Spleen (tissue), 13 donors: ENCODE measurements at regions of chr3 and their contacts with region 1.

Region 1: GRCh38 chr3:187164885-187165543 is 25.7 kb upstream of the RPL39L start:
- DNase-seq: no peak
- H3K4me3 ChIP-seq: no peak overlapping the region
- H3K27ac ChIP-seq: no peak overlapping the region
- H3K4me1 ChIP-seq: peaks cover 0 to 4% (median 0%) of the 10 kb centered on the region in 6 donors
- H3K27me3 ChIP-seq: peaks cover 0 to 15% (median 0%) of the 10 kb centered on the region in 7 donors
- CTCF ChIP-seq: peak; percentile 61 to 90 (median 75)
- POLR2A ChIP-seq: no peak

Region 2: DNA sequence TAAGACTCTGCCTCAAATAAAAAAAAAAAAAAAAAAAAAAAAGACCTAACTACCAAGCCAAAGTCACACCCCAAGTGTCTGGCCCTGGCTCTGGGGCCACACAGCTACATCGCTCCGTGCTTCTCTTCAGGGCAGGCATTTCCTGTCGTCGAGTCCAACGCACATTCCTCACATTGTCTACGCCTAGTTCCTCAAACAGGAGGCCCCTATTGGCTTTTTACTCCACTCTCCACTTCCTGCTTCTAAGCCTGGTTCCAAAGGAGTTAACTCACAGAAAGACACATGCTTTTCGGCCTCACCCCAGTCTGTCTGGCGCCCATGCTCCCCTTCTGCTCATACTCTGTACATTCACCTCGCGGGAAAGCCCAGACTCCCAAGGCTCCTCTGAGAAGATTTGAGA is 419.0 kb before region 1 on chr3:
- intact Hi-C with region 1: no loop called
- DNase-seq: no peak
- H3K4me3 ChIP-seq: no peak overlapping the region
- H3K27ac ChIP-seq: no peak overlapping the region
- H3K4me1 ChIP-seq: no peaks in the 10 kb centered on the region
- H3K27me3 ChIP-seq: no peaks in the 10 kb centered on the region
- CTCF ChIP-seq: no peak
- POLR2A ChIP-seq: no peak

Region 3: DNA sequence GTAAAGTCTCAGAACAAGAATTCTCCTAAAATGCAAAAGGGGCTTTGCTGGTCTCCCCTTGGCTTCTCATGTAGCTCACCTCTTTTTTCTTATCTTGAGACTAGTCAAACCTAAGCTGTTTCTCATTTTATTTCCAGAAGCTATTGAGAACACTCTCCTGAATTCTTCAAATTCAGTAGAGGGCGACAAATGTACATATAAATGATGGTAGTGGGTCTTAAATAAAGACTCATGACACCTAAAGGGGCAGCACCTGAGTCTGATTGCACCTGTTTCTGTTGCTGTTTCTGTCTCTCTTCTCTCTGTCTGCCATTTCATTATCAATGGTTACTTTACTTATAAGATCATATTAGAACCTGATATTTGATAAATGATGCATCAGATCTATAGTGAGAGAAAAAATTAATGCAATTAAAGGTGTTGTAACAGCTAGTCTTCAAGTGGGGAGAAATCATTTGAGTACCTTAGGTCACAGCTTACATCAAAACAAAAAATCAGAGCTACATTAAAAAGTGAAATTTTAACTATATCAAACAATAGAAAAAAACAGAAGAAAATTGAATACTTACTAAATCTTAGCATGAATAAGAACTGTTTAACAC is 315.5 kb before region 1 on chr3:
- intact Hi-C with region 1: loop called (anchors 5 kb)
- DNase-seq: no peak
- H3K4me3 ChIP-seq: no peak overlapping the region
- H3K27ac ChIP-seq: no peak overlapping the region
- H3K4me1 ChIP-seq: peaks cover 0 to 9% (median 0%) of the 10 kb centered on the region in 6 donors
- H3K27me3 ChIP-seq: peaks cover 0 to 22% (median 0%) of the 10 kb centered on the region in 7 donors
- CTCF ChIP-seq: peak in 10 of 11 experiments; percentile 31 to 73 (median 54)
- POLR2A ChIP-seq: no peak

Region 4: DNA sequence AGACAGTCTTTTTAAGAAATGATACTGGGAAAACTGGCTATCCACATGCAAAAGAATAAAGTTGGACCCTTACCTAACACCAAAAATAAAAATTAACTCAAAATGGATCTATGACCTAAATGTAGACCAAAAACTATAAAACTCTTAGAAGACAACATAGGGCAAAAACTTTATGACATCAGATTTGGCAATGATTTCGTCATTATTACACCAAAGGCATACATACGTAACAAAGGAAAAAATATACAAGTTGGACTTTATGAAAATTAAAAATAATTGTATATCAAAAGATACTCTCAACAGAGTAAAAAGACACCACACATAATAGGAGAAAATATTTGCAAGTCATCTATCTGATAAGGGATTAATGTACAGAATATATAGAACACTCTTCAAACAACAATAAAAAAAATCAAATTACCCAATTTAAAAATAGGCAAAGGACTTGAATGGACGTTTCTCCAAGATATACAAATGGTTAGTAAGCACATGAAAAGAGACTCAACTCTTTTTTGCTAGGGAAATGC is 103.3 kb before region 1 on chr3:
- intact Hi-C with region 1: no loop called
- DNase-seq: no peak
- H3K4me3 ChIP-seq: no peak overlapping the region
- H3K27ac ChIP-seq: no peak overlapping the region
- H3K4me1 ChIP-seq: peaks cover 6 to 70% (median 31%) of the 10 kb centered on the region in 6 donors
- H3K27me3 ChIP-seq: no peaks in the 10 kb centered on the region
- CTCF ChIP-seq: no peak
- POLR2A ChIP-seq: no peak

Region 5: GRCh38 chr3:187112934-187113793 is 51.9 kb before region 1 on chr3:
- intact Hi-C with region 1: loop called (anchors 5 kb)
- DNase-seq: no peak
- H3K4me3 ChIP-seq: no peak overlapping the region
- H3K27ac ChIP-seq: no peak overlapping the region
- H3K4me1 ChIP-seq: peaks cover 0 to 6% (median 2%) of the 10 kb centered on the region in 6 donors
- H3K27me3 ChIP-seq: no peaks in the 10 kb centered on the region
- CTCF ChIP-seq: peak; percentile 24 to 72 (median 65)
- POLR2A ChIP-seq: no peak

Region 6: DNA sequence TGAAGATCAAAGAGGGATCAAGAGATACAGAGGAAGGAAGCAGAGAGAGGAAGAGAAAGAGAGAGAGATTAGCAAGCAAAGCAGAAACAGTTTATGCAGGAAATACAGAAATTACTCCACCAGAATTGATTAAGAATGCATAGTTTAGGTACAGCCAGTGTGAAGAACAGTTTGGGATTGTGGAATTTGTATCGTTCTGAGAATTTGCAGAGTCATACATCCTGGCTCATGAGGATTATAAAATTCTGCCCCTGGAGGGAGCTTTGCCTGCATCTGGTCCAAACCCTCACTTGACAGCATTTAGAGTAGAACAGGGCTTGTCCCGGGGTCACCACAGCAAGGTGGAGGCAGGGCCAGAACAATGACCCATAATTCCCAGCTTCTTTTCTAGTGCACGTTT is 82.4 kb after region 1 on chr3:
- intact Hi-C with region 1: no loop called
- DNase-seq: no peak
- H3K4me3 ChIP-seq: no peak overlapping the region
- H3K27ac ChIP-seq: no peak overlapping the region
- H3K4me1 ChIP-seq: no peaks in the 10 kb centered on the region
- H3K27me3 ChIP-seq: peaks cover 0 to 52% (median 0%) of the 10 kb centered on the region in 7 donors
- CTCF ChIP-seq: no peak
- POLR2A ChIP-seq: no peak